PC-9 (cell line): ENCODE measurements at regions of chr17 and their contacts with region 1.

Region 1: GRCh38 chr17:30477083-30477773 is at the start of gene GOSR1:
- DNase-seq: peak; percentile 86
- H3K4me3 ChIP-seq: peak within 1 kb of the TSS; percentile 98
- H3K27ac ChIP-seq: peak within 1 kb of the TSS; percentile 45; the same call in 1 of the 2 replicates
- H3K4me1 ChIP-seq: peaks cover 11% of the 10 kb centered on the region
- H3K27me3 ChIP-seq: no peaks in the 10 kb centered on the region
- CTCF ChIP-seq: peak; percentile 78
- total RNA-seq, gene GOSR1: 30.1 and 43.7 TPM in 2 replicates

Region 2: DNA sequence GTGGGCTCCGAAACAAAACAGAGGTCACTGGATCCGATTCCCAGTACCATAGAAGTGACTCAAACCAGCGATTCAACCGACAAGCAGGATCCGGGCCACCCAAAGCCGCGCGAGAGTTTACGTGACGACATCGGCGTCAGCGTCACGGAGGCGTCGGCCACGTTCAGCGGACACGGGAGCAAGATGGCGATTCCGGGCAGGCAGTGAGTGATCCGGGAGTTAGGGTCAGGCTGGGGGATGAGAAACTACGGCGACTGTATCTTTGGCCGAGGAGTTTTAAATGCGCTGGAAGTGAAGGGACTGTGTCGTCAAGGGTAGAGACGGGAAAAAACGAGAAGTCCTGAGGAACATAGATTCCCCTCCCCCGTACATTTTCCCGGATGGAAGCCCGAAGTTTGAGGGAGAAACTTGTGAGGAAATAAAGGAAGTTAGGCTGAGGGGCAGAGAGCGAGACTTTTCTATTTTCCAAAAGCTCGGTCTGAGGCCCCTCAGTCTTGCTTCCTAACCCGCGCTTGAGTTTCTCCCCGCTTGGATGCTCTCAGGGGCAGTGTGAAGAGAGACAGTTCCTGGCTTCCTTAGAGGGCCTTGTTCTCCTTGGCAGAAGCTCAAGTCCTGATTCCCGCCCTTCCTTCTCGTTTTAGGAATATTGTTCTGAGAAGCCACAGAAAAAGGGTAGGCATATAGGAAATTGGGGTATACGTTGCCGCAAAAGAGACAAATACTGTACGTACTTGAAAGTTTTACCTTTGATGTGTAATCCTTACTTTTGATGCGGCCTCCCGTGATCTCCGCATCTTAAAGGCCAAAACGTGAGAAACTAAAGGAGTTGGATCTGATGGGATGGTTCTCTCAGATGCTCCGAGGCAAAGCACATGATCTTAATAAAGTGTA is 360.3 kb before region 1 on chr17 and contains the start of gene NSRP1:
- CTCF ChIA-PET with region 1: no interaction called
- POLR2A ChIA-PET with region 1: no interaction called
- intact Hi-C with region 1: loop called (anchors 10 kb)
- DNase-seq: peak; percentile 87 to 89
- H3K4me3 ChIP-seq: peak within 1 kb of the TSS; percentile 75
- H3K27ac ChIP-seq: peak within 1 kb of the TSS; percentile 74
- H3K4me1 ChIP-seq: peaks cover 25% of the 10 kb centered on the region
- H3K27me3 ChIP-seq: no peaks in the 10 kb centered on the region
- CTCF ChIP-seq: no peak
- total RNA-seq, gene NSRP1: 34.3 and 37.9 TPM in 2 replicates

Region 3: GRCh38 chr17:30716461-30717300 is 239.5 kb after region 1 on chr17:
- CTCF ChIA-PET with region 1: no interaction called
- POLR2A ChIA-PET with region 1: no interaction called
- intact Hi-C with region 1: loop called (anchors 10 kb)
- DNase-seq: no peak
- H3K4me3 ChIP-seq: no peak overlapping the region
- H3K27ac ChIP-seq: no peak overlapping the region
- H3K4me1 ChIP-seq: no peaks in the 10 kb centered on the region
- H3K27me3 ChIP-seq: no peaks in the 10 kb centered on the region
- CTCF ChIP-seq: no peak